ENCODE measurements at regions of chr18 and their contacts with region 1.

Region 1: GRCh38 chr18:50819728-50820378 is at the start of gene MRO:
- DNase-seq: peak; percentile 93
- H3K4me3 ChIP-seq: peak within 1 kb of the TSS; percentile 15 to 42 (median 36)
- H3K27ac ChIP-seq: peak within 1 kb of the TSS; percentile 8 to 38 (median 26)
- H3K4me1 ChIP-seq: peaks cover 0 to 31% (median 17%) of the 10 kb centered on the region in 4 donors
- H3K27me3 ChIP-seq: no peaks in the 10 kb centered on the region
- CTCF ChIP-seq: peak; percentile 79 to 93 (median 84)
- EP300 ChIP-seq: peak in 2 of 4 donors; percentile 35 to 78
- POLR2A ChIP-seq: no peak
- total RNA-seq, gene MRO: under 0.01 to 2.5 (median 0.45) TPM

Region 2: DNA sequence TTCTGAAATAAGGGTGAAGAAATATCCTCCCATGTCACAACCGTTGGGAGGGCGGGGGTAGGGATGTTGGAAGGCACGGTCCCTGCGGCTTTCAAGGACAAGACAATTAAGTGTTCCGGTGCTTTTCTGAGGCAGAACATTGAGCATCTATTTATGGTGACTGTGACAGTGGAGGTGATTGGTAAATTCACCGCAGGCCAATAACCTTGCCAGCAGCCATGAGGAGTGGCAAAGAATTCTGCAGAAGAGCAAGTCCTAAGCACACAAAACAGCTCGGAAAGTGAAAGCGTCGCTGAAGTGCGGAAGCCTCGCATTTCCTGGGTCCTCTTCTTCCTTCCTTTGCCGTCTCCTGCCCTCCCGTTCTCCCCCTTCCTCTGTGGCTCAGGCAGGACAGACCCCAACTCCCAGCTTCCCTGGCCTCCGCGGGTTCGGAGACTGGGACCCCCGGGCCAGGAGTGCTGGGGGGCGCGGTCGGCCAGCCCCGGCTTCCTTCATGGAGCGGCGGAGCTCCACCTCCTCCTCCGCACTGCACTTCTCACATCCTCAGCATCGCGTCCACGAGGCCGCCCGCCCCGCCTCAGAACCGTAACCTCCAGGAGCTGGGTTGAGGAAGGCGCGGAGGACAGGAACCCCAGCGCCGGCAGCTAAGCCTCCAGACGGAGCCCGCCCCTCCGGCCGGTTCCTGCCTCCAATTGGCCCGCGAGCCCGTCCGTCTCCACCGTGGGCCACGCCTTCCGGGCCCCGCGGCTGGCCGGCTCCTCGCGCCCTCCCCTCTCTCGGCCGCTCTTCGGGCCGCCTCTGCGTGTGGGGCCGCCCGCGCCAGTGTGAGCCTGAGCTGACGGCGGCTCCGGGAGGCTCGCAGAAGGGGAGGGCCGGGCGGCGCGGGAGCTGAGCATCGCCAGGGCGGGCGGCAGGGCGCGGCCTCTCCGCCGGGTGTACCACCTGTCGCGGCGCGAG is 58.8 kb after region 1 on chr18 and contains the start of gene ME2:
- intact Hi-C with region 1: loop called (anchors 5 kb)
- DNase-seq: peak; percentile 96
- H3K4me3 ChIP-seq: peak within 1 kb of the TSS; percentile 81 to 90 (median 83)
- H3K27ac ChIP-seq: peak within 1 kb of the TSS; percentile 95 to 98 (median 96)
- H3K4me1 ChIP-seq: peaks cover 0 to 20% (median 11%) of the 10 kb centered on the region in 4 donors
- H3K27me3 ChIP-seq: no peaks in the 10 kb centered on the region
- CTCF ChIP-seq: no peak
- EP300 ChIP-seq: no peak
- POLR2A ChIP-seq: peak; percentile 50 to 62
- total RNA-seq, gene ME2: 49.6 to 66.2 (median 62.6) TPM

Region 3: GRCh38 chr18:50967714-50968661 is 148.1 kb after region 1 on chr18 and contains the start of gene ELAC1:
- intact Hi-C with region 1: loop called (anchors 5 kb)
- DNase-seq: peak; percentile 89
- H3K4me3 ChIP-seq: peak within 1 kb of the TSS; percentile 73 to 99 (median 84)
- H3K27ac ChIP-seq: peak within 1 kb of the TSS; percentile 97 to 100 (median 99)
- H3K4me1 ChIP-seq: peaks cover 0 to 24% (median 17%) of the 10 kb centered on the region in 4 donors
- H3K27me3 ChIP-seq: no peaks in the 10 kb centered on the region
- CTCF ChIP-seq: no peak
- EP300 ChIP-seq: no peak
- POLR2A ChIP-seq: peak in 1 of 2 donors; percentile 57
- total RNA-seq, gene ELAC1: 3.9 to 5.8 (median 5.5) TPM

Region 4: GRCh38 chr18:51051105-51051712 is 231.4 kb after region 1 on chr18:
- intact Hi-C with region 1: loop called (anchors 1 kb)
- DNase-seq: no peak
- H3K4me3 ChIP-seq: no peak overlapping the region
- H3K27ac ChIP-seq: no peak overlapping the region
- H3K4me1 ChIP-seq: peaks cover 0 to 37% (median 13%) of the 10 kb centered on the region in 4 donors
- H3K27me3 ChIP-seq: no peaks in the 10 kb centered on the region
- CTCF ChIP-seq: peak; percentile 22 to 74 (median 62)
- EP300 ChIP-seq: no peak
- POLR2A ChIP-seq: no peak